SK-N-SH (cell line): ENCODE measurements at regions of chr4 and their contacts with region 1.

Region 1: GRCh38 chr4:40299704-40300336 is 35.3 kb upstream of the CHRNA9 start:
- DNase-seq: no peak
- H3K4me3 ChIP-seq: no peak overlapping the region
- H3K27ac ChIP-seq: no peak overlapping the region
- H3K4me1 ChIP-seq: no peaks in the 10 kb centered on the region
- H3K27me3 ChIP-seq: no peaks in the 10 kb centered on the region
- CTCF ChIP-seq: no peak
- EP300 ChIP-seq: no peak
- RAD21 ChIP-seq: peak; percentile 16; the same call in 1 of the 2 replicates

Region 2: GRCh38 chr4:40316782-40317635 is 17.2 kb after region 1 on chr4:
- CTCF ChIA-PET with region 1: interaction called, 10 read pairs
- POLR2A ChIA-PET with region 1: no interaction called
- DNase-seq: peak; percentile 57
- H3K4me3 ChIP-seq: peak overlapping the region; percentile 34 to 63
- H3K27ac ChIP-seq: peak overlapping the region; percentile 93 to 100
- H3K4me1 ChIP-seq: peaks cover 13 to 16% of the 10 kb centered on the region in 2 experiments
- H3K27me3 ChIP-seq: no peaks in the 10 kb centered on the region
- CTCF ChIP-seq: peak; percentile 84
- EP300 ChIP-seq: 0 out of 4 replicates have a peak, but pooled peaks of 1 of the 2 experiments have one; percentile 31
- RAD21 ChIP-seq: peak; percentile 63